ENCODE measurements at regions of chr17 and their contacts with region 1.

Region 1: DNA sequence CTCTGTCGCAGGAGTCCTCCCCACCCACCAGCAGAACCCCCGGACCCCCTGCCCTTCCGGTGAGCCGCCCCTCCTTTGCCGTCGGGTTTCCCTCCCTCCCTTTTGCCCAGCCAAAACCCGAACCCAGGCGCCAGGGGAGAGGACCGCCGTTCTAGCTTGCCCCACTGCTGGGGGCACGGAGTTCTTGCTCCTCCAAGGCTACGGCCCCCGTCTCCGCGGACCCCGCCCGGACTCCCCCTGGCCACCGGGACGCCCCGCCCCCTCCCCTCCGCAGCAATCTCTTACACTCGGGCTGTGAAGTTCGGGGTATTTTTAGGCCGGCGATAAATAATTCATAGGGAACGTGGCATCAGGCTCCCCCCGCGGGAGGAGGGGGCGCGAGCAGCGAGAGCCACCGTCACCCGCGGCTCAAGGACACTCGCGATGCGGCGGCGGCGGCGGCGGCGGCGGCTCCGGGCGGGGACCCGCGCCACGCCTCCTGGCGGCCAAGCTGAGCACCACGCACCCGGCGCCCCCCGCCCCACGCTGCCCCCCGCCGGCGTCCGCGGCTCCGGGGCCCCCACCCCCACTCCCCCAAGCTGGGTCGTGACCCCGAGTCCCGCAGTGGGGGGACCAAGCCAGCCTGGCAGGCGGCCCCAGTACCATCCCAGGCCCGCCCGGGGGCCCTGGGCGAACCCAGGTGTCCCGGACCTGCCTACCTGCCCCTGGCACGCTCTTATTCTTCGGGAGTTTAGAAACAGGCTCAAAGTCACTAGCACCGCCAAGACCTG is at the start of gene GRIN2C:
- DNase-seq: no peak
- H3K4me3 ChIP-seq: no peak within 1 kb of the TSS
- H3K27ac ChIP-seq: no peak within 1 kb of the TSS
- H3K4me1 ChIP-seq: peaks cover 5% of the 10 kb centered on the region
- H3K27me3 ChIP-seq: peaks cover 26% of the 10 kb centered on the region
- CTCF ChIP-seq: peak in 1 of 2 donors; percentile 12
- total RNA-seq, gene GRIN2C: under 0.01 to 0.19 TPM

Region 2: GRCh38 chr17:74754832-74755231 is 104.8 kb before region 1 on chr17:
- CTCF ChIA-PET with region 1: no interaction called
- dilution Hi-C with region 1: no loop called
- in situ Hi-C with region 1: no loop called
- intact Hi-C with region 1: no loop called
- DNase-seq: no peak
- H3K4me3 ChIP-seq: no peak overlapping the region
- H3K27ac ChIP-seq: no peak overlapping the region
- H3K4me1 ChIP-seq: peaks cover 37% of the 10 kb centered on the region
- H3K27me3 ChIP-seq: no peaks in the 10 kb centered on the region
- CTCF ChIP-seq: no peak

Region 3: GRCh38 chr17:74807925-74808324 is 51.7 kb before region 1 on chr17:
- CTCF ChIA-PET with region 1: no interaction called
- dilution Hi-C with region 1: loop called (anchors 5 kb)
- in situ Hi-C with region 1: no loop called
- intact Hi-C with region 1: no loop called
- DNase-seq: no peak
- H3K4me3 ChIP-seq: no peak overlapping the region
- H3K27ac ChIP-seq: no peak overlapping the region
- H3K4me1 ChIP-seq: no peaks in the 10 kb centered on the region
- H3K27me3 ChIP-seq: no peaks in the 10 kb centered on the region
- CTCF ChIP-seq: no peak

Region 4: DNA sequence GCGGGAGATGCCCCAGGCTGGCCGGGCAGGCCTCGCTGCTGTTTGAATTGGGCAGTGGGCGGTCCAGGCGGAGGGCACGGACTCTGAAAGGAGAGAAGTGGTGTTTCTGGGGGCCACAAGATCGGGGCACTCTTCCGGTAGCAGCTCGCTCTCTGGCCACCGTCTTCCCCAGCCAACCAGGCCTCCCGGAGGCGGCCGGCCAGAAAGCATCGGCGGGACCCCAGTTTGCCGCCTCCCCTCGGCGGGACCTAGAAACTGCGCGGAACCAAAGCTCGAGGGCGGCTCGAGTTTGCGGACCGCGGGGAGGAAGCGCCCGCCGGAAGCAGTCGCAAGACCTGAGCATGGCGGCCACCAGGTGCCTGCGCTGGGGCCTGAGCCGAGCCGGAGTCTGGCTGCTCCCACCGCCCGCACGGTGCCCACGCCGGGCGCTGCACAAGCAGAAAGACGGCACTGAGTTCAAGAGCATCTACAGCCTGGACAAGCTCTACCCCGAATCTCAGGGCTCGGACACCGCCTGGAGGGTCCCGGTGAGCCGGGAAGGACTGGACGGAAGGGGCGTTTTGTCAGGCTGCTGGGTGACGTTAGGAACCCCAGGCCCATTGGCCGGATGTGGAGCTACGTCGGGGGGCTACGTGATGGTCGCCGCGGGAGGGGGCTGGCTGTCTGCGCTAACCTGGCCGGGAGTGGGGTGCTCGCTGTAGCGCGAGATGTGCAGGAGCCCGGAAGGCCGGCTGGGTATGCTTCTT is 152.9 kb after region 1 on chr17 and contains the start of gene MRPL58:
- CTCF ChIA-PET with region 1: no interaction called
- dilution Hi-C with region 1: no loop called
- in situ Hi-C with region 1: no loop called
- intact Hi-C with region 1: no loop called
- DNase-seq: peak; percentile 79
- H3K4me3 ChIP-seq: peak within 1 kb of the TSS; percentile 75 to 86 (median 83)
- H3K27ac ChIP-seq: peak within 1 kb of the TSS; percentile 79
- H3K4me1 ChIP-seq: peaks cover 19% of the 10 kb centered on the region
- H3K27me3 ChIP-seq: no peaks in the 10 kb centered on the region
- CTCF ChIP-seq: peak; percentile 13 to 67
- total RNA-seq, gene MRPL58: 22.2 to 43.2 TPM

Measured in mammary epithelial cell (primary cell).